ENCODE measurements at regions of chr14 and their contacts with region 1.

Region 1: GRCh38 chr14:103628684-103629502 is at the start of gene KLC1:
- DNase-seq: peak; percentile 69 to 92 (median 80)
- ATAC-seq: peak; percentile 76
- H3K4me3 ChIP-seq: peak within 1 kb of the TSS; percentile 76
- H3K4me3 Mint-ChIP-seq: peak within 1 kb of the TSS; percentile 91
- H3K27ac ChIP-seq: peak within 1 kb of the TSS; percentile 66 to 79
- H3K27ac Mint-ChIP-seq: peak within 1 kb of the TSS; percentile 91
- H3K4me1 ChIP-seq: peaks cover 66% of the 10 kb centered on the region
- H3K4me1 Mint-ChIP-seq: peaks cover 50% of the 10 kb centered on the region
- H3K27me3 ChIP-seq: no peaks in the 10 kb centered on the region
- H3K27me3 Mint-ChIP-seq: no peaks in the 10 kb centered on the region
- CTCF ChIP-seq: no peak
- total RNA-seq, gene KLC1: 111 to 119 TPM

Region 2: GRCh38 chr14:103528587-103529382 is 100.1 kb before region 1 on chr14 and contains the start of gene TRMT61A:
- CTCF ChIA-PET with region 1: no interaction called
- POLR2A ChIA-PET with region 1: no interaction called
- intact Hi-C with region 1: loop called in 1 of 2 experiments (anchors 5 kb)
- DNase-seq: peak; percentile 63 to 92 (median 74)
- ATAC-seq: peak; percentile 91
- H3K4me3 ChIP-seq: peak within 1 kb of the TSS; percentile 93
- H3K4me3 Mint-ChIP-seq: peak within 1 kb of the TSS; percentile 96
- H3K27ac ChIP-seq: peak within 1 kb of the TSS; percentile 61 to 77
- H3K27ac Mint-ChIP-seq: peak within 1 kb of the TSS; percentile 92
- H3K4me1 ChIP-seq: peaks cover 45% of the 10 kb centered on the region
- H3K4me1 Mint-ChIP-seq: peaks cover 36% of the 10 kb centered on the region
- H3K27me3 ChIP-seq: no peaks in the 10 kb centered on the region
- H3K27me3 Mint-ChIP-seq: peaks cover 4% of the 10 kb centered on the region
- CTCF ChIP-seq: no peak
- total RNA-seq, gene TRMT61A: 9.2 to 9.8 TPM

Region 3: DNA sequence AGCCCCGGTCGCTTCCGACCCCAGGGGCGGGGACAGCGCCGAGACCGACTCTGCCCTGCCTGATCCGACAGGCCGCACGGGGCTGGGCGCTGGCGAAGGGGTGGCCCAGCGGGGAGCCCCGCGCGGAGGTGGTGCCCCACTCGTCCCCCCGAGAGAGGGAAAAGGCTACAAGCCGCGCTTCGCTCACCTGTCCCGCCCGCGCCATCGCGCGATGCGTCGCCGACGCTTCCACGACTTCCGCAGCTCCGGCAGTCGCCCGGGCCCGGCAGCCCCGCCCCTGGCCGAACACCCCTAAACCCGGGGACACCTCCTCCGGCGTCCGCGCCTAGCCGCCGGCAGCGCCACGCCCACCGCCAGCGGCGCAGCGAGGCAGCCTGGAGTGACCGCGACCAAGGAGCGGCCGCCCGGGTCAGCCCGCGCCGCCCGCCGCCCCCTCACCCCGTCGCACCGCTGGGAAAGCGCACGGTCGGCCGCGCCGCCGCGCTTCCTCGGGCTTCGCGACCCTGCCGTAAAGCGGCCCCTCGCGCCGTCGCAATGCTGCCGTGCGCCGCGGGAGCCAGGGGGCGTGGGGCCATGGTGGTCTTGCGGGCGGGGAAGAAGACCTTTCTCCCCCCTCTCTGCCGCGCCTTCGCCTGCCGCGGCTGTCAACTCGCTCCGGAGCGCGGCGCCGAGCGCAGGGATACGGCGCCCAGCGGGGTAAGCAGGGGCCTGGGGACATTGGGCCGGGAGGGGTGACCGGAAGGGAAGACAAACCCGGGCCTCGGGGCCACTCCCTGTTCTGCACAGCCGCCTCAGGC is 66.3 kb before region 1 on chr14 and contains the starts of genes BAG5 and COA8:
- CTCF ChIA-PET with region 1: no interaction called
- POLR2A ChIA-PET with region 1: interaction called, 9 read pairs
- intact Hi-C with region 1: loop called in 1 of 2 experiments (anchors 1 kb)
- DNase-seq: peak; percentile 68 to 93 (median 82)
- ATAC-seq: peak; percentile 79
- H3K4me3 ChIP-seq: peak within 1 kb of the TSS; percentile 99
- H3K4me3 Mint-ChIP-seq: peak within 1 kb of the TSS; percentile 96
- H3K27ac ChIP-seq: peak within 1 kb of the TSS; percentile 72 to 85
- H3K27ac Mint-ChIP-seq: peak within 1 kb of the TSS; percentile 94
- H3K4me1 ChIP-seq: peaks cover 56% of the 10 kb centered on the region
- H3K4me1 Mint-ChIP-seq: peaks cover 62% of the 10 kb centered on the region
- H3K27me3 ChIP-seq: no peaks in the 10 kb centered on the region
- H3K27me3 Mint-ChIP-seq: no peaks in the 10 kb centered on the region
- CTCF ChIP-seq: no peak
- total RNA-seq, gene BAG5: 39.4 to 40.3 TPM
- total RNA-seq, gene COA8: 9.1 to 10.7 TPM

Region 4: GRCh38 chr14:103606963-103607668 is 21.8 kb before region 1 on chr14:
- CTCF ChIA-PET with region 1: interaction called, 3 read pairs
- POLR2A ChIA-PET with region 1: interaction called, 10 read pairs
- intact Hi-C with region 1: no loop called
- DNase-seq: peak in 13 of 14 experiments; percentile 20 to 77 (median 40)
- ATAC-seq: peak; percentile 83
- H3K4me3 ChIP-seq: peak overlapping the region; percentile 44
- H3K4me3 Mint-ChIP-seq: peak overlapping the region; percentile 85
- H3K27ac ChIP-seq: no peak overlapping the region
- H3K27ac Mint-ChIP-seq: no peak overlapping the region
- H3K4me1 ChIP-seq: peaks cover 22% of the 10 kb centered on the region
- H3K4me1 Mint-ChIP-seq: peaks cover 18% of the 10 kb centered on the region
- H3K27me3 ChIP-seq: peaks cover 5 to 7% of the 10 kb centered on the region in 2 experiments
- H3K27me3 Mint-ChIP-seq: peaks cover 7% of the 10 kb centered on the region
- CTCF ChIP-seq: peak; percentile 26

Region 5: DNA sequence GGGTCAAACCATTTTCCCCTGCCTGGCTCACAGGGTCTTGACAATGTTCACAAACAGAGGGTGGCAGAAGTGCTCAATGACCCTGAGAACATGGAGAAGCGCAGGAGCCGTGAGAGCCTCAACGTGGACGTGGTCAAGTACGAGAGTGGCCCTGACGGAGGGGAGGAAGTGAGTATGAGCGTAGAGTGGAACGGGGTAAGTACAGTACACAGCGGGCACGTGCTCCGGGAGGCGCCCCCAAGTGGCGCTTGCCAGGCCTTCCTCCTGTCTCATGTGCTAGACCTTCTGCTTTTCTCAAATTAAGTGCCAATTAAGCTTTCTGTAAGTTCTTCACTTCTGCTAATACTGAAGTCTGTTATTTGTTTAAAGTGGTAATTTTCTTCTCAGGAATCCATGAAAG is 50.5 kb after region 1 on chr14:
- CTCF ChIA-PET with region 1: no interaction called
- POLR2A ChIA-PET with region 1: no interaction called
- intact Hi-C with region 1: loop called in 1 of 2 experiments (anchors 10 kb)
- DNase-seq: peak in 12 of 14 experiments; percentile 18 to 64 (median 29)
- ATAC-seq: peak; percentile 86
- H3K4me3 ChIP-seq: no peak overlapping the region
- H3K4me3 Mint-ChIP-seq: no peak overlapping the region
- H3K27ac ChIP-seq: no peak overlapping the region
- H3K27ac Mint-ChIP-seq: peak overlapping the region; percentile 9
- H3K4me1 ChIP-seq: no peaks in the 10 kb centered on the region
- H3K4me1 Mint-ChIP-seq: peaks cover 8% of the 10 kb centered on the region
- H3K27me3 ChIP-seq: no peaks in the 10 kb centered on the region
- H3K27me3 Mint-ChIP-seq: no peaks in the 10 kb centered on the region
- CTCF ChIP-seq: peak; percentile 32

Region 6: GRCh38 chr14:103692159-103692558 is 63.3 kb after region 1 on chr14:
- CTCF ChIA-PET with region 1: no interaction called
- POLR2A ChIA-PET with region 1: no interaction called
- intact Hi-C with region 1: no loop called
- DNase-seq: no peak
- ATAC-seq: no peak
- H3K4me3 ChIP-seq: no peak overlapping the region
- H3K4me3 Mint-ChIP-seq: no peak overlapping the region
- H3K27ac ChIP-seq: no peak overlapping the region
- H3K27ac Mint-ChIP-seq: no peak overlapping the region
- H3K4me1 ChIP-seq: peaks cover 2% of the 10 kb centered on the region
- H3K4me1 Mint-ChIP-seq: peaks cover 1% of the 10 kb centered on the region
- H3K27me3 ChIP-seq: no peaks in the 10 kb centered on the region
- H3K27me3 Mint-ChIP-seq: no peaks in the 10 kb centered on the region
- CTCF ChIP-seq: no peak

Region 7: GRCh38 chr14:103715052-103716000 is 86.4 kb after region 1 on chr14 and contains the starts of genes XRCC3 and ZFYVE21:
- CTCF ChIA-PET with region 1: no interaction called
- POLR2A ChIA-PET with region 1: interaction called, 3 read pairs
- intact Hi-C with region 1: loop called in 1 of 2 experiments (anchors 2 kb)
- DNase-seq: peak; percentile 99 to 100 (median 99)
- ATAC-seq: peak; percentile 93
- H3K4me3 ChIP-seq: peak within 1 kb of the TSS; percentile 51
- H3K4me3 Mint-ChIP-seq: peak within 1 kb of the TSS; percentile 94
- H3K27ac ChIP-seq: no peak within 1 kb of the TSS
- H3K27ac Mint-ChIP-seq: peak within 1 kb of the TSS; percentile 84
- H3K4me1 ChIP-seq: peaks cover 39% of the 10 kb centered on the region
- H3K4me1 Mint-ChIP-seq: peaks cover 43% of the 10 kb centered on the region
- H3K27me3 ChIP-seq: no peaks in the 10 kb centered on the region
- H3K27me3 Mint-ChIP-seq: no peaks in the 10 kb centered on the region
- CTCF ChIP-seq: no peak
- total RNA-seq, gene XRCC3: 4.6 to 4.8 TPM
- total RNA-seq, gene ZFYVE21: 2.6 to 3.0 TPM

Region 8: DNA sequence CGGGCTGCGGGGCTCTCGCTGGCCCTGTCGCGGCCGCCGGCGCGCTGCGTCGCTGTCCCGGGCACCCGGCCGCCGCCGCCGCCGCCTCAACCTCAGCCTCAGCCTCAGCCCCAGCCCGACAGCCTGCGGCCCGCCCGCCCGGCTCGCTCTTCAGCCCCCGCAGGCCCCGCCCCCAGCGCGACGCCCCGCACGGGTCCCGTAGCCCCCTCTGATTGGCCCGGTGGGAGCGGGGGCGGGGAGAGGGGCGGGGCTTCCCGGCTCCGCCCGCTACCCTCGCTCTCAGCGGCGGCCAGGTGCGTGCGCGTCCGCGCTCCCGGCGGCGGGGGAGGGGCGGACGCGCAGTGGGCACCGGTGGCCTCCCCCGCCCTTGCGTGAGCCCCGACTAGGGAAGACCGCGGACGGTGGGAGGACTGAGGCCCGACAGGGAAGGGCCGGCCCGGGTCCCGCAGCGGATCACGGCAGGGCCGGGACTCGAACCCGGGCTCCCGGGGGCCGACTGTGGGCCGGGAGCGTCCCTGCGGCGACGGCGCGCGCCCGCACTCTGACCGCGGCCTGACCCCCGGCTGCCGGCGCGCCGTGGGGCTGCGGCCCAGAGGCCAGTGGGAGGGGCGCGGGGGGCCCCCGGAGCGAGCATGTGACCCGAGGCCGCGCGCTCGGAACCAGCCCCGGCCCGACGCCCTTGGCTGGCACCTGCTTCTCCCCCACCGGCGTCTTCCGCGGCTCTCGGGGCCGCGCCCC is 218.7 kb after region 1 on chr14 and contains the start of gene PPP1R13B:
- CTCF ChIA-PET with region 1: no interaction called
- POLR2A ChIA-PET with region 1: no interaction called
- intact Hi-C with region 1: loop called in 1 of 2 experiments (anchors 5 kb)
- DNase-seq: peak; percentile 86 to 97 (median 94)
- ATAC-seq: peak; percentile 97
- H3K4me3 ChIP-seq: peak within 1 kb of the TSS; percentile 74
- H3K4me3 Mint-ChIP-seq: peak within 1 kb of the TSS; percentile 95
- H3K27ac ChIP-seq: no peak within 1 kb of the TSS
- H3K27ac Mint-ChIP-seq: peak within 1 kb of the TSS; percentile 78
- H3K4me1 ChIP-seq: peaks cover 14% of the 10 kb centered on the region
- H3K4me1 Mint-ChIP-seq: peaks cover 23% of the 10 kb centered on the region
- H3K27me3 ChIP-seq: no peaks in the 10 kb centered on the region
- H3K27me3 Mint-ChIP-seq: no peaks in the 10 kb centered on the region
- CTCF ChIP-seq: no peak
- total RNA-seq, gene PPP1R13B: 14.3 to 14.4 TPM